ENCODE measurements at regions of chr3 and their contacts with region 1.

Region 1: GRCh38 chr3:100400780-100401673 is at the starts of genes LNP1 and TOMM70:
- DNase-seq: peak; percentile 86
- ATAC-seq: peak; percentile 92
- H3K4me3 Mint-ChIP-seq: peak within 1 kb of the TSS; percentile 96
- H3K27ac Mint-ChIP-seq: peak within 1 kb of the TSS; percentile 95
- H3K4me1 Mint-ChIP-seq: peaks cover 58% of the 10 kb centered on the region
- H3K27me3 Mint-ChIP-seq: no peaks in the 10 kb centered on the region
- CTCF ChIP-seq: no peak
- total RNA-seq, gene LNP1: 1.7 and 2.4 TPM in 2 replicates
- total RNA-seq, gene TOMM70: 34.5 and 37.3 TPM in 2 replicates

Region 2: DNA sequence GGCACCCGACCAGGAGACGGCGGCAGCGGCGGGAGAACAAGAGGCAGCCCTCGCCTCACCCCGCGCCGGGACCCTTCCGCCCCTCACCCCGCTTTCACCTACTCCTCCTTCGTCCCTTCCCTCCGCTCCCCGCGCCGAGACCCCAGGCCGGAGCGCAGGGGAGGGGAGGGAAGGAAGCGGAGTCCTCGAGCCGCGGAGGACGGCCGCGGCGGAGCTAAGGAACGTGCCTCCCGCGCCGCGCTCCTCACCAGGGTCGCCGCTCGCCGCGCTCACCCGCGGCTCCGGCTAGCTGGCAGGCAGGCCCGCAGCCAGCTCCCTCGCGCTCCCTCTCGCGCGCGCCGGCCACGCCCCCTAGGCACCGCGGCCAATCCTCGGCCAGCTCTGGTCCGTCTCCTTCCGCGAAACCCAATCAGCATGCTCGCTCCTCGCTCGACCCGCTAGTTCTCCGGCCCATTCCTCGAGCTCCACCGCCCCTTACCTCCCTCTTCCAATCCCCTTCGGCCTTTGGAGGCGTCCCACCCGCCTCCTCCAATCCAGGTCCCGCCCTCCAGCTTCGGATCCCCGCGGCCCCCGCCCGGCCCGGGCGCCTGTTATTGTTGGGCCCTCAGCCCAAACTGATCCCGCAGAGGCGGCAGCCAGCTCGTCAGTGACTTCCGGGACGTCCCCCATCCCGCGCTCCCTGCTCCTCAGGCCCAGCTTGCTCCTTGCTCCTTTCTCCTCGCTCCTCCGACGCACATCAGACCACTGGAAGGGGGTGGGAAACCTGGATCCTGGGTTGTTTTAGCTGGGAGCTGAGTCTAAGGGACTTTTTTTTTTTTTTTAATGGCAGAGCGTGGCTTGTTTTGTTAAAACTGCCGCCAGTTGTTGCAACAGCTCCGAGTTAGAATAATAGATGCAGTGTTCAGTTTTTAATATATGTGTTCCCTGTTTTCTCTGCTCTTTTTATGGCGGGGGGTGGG is 1499.4 kb before region 1 on chr3 and contains the start of gene DCBLD2:
- CTCF ChIA-PET with region 1: no interaction called
- POLR2A ChIA-PET with region 1: no interaction called
- intact Hi-C with region 1: loop called (anchors 2 kb)
- DNase-seq: peak; percentile 86
- ATAC-seq: peak; percentile 98
- H3K4me3 Mint-ChIP-seq: peak within 1 kb of the TSS; percentile 88
- H3K27ac Mint-ChIP-seq: peak within 1 kb of the TSS; percentile 73
- H3K4me1 Mint-ChIP-seq: peaks cover 19% of the 10 kb centered on the region
- H3K27me3 Mint-ChIP-seq: peaks cover 12% of the 10 kb centered on the region
- CTCF ChIP-seq: no peak
- total RNA-seq, gene DCBLD2: 0.95 and 1.8 TPM in 2 replicates

Region 3: DNA sequence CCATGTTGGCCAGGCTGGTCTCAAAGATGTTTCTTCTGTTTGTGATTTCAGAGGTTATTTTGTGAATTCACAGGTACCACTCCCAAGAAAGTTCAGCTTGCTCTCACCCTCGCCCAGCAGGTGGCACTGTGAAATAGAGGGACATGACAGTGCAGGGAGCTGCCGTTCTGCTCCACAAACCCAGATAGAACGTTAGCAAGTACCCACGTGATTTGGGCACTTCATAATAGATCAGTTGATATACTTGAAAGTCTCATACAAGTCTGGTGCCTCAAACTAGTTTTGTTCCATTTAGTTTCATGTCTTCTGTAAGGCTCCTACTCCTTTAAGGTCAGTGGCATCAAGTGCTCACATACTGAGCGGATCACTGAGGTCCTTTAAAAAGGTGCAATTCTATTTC is 332.2 kb before region 1 on chr3:
- CTCF ChIA-PET with region 1: no interaction called
- POLR2A ChIA-PET with region 1: no interaction called
- intact Hi-C with region 1: loop called (anchors 5 kb)
- DNase-seq: peak; percentile 67
- ATAC-seq: peak; percentile 95
- H3K4me3 Mint-ChIP-seq: no peak overlapping the region
- H3K27ac Mint-ChIP-seq: peak overlapping the region; percentile 50
- H3K4me1 Mint-ChIP-seq: peaks cover 39% of the 10 kb centered on the region
- H3K27me3 Mint-ChIP-seq: no peaks in the 10 kb centered on the region
- CTCF ChIP-seq: peak; percentile 83

Region 4: DNA sequence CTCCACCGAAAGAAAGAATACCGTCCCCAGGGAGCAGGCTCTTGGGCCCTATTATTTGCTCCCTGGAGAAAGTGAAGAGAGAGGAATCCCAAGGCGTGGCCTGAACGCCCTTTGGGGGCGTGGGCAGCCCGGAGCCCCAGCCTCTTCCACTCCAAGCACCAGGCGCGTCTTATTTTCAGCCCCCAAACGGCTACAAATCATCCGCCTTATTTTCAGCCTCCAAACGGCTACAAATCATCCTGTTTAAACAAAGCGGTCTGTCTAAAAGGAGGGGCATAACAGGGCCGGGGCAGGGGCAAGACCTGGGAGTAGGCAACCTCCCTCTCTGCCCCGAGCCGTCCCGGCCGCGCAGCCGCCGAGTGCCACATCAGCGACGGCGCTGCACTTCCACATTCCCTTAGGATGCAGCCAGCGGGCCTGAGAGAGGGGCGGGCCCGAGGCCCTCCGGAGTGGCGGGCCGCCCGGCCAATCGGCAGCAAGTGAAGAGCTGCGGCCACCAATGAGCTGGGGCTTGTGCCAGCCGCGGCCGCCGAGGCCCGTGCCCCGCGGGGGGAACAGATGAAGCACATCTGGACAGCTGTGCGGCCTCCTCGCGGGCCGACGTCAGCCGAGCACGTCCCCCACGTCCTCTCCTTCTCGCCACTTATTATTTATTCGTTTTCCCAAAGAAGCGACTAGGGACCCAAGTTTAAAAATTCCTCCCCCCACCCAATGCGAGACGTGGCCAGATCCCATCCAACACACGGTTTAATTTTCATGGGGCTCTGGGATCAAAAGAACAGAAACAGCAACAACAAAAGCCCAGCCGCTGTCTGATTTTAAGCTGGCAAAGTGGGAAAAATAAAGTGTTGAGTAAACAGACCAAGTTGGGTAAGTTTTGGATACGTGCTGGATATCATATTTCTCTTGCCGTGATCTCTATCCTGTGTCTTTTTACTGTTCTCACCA is 91.3 kb after region 1 on chr3 and contains the start of gene TMEM45A:
- CTCF ChIA-PET with region 1: no interaction called
- POLR2A ChIA-PET with region 1: no interaction called
- intact Hi-C with region 1: loop called (anchors 5 kb)
- DNase-seq: peak; percentile 64
- ATAC-seq: peak; percentile 98
- H3K4me3 Mint-ChIP-seq: peak within 1 kb of the TSS; percentile 85
- H3K27ac Mint-ChIP-seq: no peak within 1 kb of the TSS
- H3K4me1 Mint-ChIP-seq: peaks cover 20% of the 10 kb centered on the region
- H3K27me3 Mint-ChIP-seq: peaks cover 19% of the 10 kb centered on the region
- CTCF ChIP-seq: no peak
- total RNA-seq, gene TMEM45A: 0.10 and 0.13 TPM in 2 replicates

Region 5: GRCh38 chr3:101381809-101382208 is 980.8 kb after region 1 on chr3:
- CTCF ChIA-PET with region 1: no interaction called
- POLR2A ChIA-PET with region 1: no interaction called
- intact Hi-C with region 1: loop called (anchors 5 kb)
- DNase-seq: no peak
- ATAC-seq: peak; percentile 34
- H3K4me3 Mint-ChIP-seq: no peak overlapping the region
- H3K27ac Mint-ChIP-seq: no peak overlapping the region
- H3K4me1 Mint-ChIP-seq: peaks cover 43% of the 10 kb centered on the region
- H3K27me3 Mint-ChIP-seq: no peaks in the 10 kb centered on the region
- CTCF ChIP-seq: no peak

Region 6: DNA sequence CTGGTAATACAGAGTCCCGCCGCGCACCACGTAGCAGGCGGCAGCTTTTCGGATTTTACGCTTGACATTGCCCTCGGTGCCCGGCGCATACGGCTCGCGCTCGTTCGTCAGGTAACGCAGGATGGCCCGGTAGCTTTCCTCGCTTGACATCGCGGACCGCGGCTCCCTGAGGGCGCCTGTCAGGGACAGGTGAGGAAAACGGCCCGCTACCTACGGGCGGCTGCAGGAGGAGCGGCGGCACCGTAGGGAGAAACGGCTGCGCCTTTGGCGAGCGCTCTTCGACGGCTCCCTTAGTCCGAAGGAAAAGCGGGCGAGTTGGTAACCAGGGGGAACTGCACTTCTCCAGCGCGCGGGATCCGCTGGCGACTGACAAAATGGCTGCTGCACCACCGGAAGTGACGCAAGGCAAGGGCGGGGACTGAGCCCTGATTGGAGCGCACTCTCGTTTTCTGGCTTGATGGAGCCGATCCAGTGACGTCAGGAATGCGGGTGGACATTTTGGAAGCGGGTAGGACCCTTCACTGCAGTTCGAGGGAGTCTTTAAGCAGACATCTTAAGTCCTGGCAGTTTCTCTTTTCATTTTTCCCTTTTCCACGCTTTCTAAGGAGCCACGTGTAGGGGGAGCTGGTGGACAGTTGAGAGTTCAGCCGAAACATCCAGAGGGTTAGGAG is 1275.9 kb after region 1 on chr3 and contains the start of gene ZBTB11:
- CTCF ChIA-PET with region 1: no interaction called
- POLR2A ChIA-PET with region 1: no interaction called
- intact Hi-C with region 1: loop called (anchors 1 kb)
- DNase-seq: peak; percentile 99
- ATAC-seq: peak; percentile 68
- H3K4me3 Mint-ChIP-seq: peak within 1 kb of the TSS; percentile 93
- H3K27ac Mint-ChIP-seq: peak within 1 kb of the TSS; percentile 96
- H3K4me1 Mint-ChIP-seq: peaks cover 56% of the 10 kb centered on the region
- H3K27me3 Mint-ChIP-seq: no peaks in the 10 kb centered on the region
- CTCF ChIP-seq: no peak
- total RNA-seq, gene ZBTB11: 26.2 and 28.7 TPM in 2 replicates